ENCODE measurements at regions of chr6 and their contacts with region 1.

Region 1: DNA sequence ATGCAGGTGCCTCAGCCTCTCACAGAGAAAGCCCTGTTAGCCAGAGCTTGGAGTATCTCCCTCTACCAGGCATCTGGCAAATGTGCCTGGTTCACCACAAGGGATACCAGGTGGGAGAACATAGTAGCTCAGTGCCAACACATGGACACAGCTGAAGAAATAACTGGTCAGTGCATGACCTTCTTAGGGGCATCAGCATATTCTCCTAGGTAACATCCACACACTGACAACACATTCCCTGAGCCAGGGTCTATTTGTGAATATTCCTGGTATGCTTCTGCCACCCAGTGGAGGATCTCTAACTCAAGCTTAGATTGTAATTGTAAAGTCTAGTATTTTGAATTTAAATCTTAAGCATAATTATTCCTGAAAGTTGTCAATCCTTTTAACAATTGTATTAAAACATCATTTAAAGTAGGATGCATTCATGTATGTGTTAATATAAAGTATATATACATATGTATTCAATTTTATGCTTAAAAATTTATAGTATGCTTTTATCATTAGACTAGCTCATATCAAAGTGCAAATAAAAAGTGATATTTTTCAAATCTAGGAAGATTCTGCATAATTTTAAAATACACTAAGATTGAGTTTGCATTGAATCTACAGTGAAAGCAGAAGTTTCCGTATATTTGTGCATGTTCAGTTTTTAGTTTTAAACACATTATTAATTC is 45.3 kb upstream of the COL21A1 start:
- H3K4me3 ChIP-seq: no peak overlapping the region
- H3K27ac ChIP-seq: no peak overlapping the region
- H3K4me1 ChIP-seq: no peaks in the 10 kb centered on the region; the same call in 1 of the 2 replicates
- CTCF ChIP-seq: peak; percentile 62; the same call in 1 of the 2 replicates

Region 2: DNA sequence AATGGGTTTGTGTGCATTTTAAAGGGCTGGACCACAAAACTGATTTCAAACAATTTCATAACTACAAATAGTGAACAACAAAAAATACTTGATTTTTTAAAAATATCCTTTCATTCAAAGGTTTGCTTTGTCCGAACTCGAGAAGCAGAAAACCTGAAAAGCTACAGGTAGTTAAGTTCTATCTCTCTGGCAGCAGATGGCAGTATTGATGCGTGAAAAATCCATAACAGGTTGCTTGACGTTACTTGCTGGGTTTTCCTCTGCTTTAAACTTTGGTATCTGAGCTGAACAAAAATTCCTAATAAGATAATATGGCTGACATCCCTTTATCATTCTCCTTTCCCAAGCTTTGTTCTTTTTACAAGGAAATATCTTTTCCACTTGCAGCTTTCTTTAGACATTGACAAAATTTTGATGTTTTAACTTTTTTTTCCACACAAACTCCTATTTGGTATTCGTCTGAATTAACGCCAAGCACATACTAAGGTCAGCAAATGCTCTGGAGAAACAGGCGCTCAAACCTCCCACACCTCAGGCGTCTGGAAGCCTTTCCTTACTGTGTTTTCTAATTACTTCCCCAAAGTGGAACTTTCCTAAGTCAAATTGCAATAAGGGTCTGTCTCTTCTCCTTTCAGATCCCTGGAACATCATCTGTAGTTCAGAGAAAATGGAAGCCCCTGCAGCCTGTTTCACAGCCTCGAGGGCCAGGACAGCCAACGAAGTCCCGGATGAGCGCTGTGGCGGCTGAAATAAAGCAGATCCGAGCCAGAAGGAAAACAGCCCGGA is 1015.7 kb before region 1 on chr6:
- CTCF ChIA-PET with region 1: interaction called, 20 read pairs
- POLR2A ChIA-PET with region 1: no interaction called
- H3K4me3 ChIP-seq: no peak overlapping the region
- H3K27ac ChIP-seq: no peak overlapping the region
- H3K4me1 ChIP-seq: no peaks in the 10 kb centered on the region
- CTCF ChIP-seq: peak; percentile 37; the same call in 1 of the 2 replicates

Region 3: GRCh38 chr6:55886185-55886836 is 406.3 kb before region 1 on chr6:
- CTCF ChIA-PET with region 1: interaction called, 11 read pairs
- POLR2A ChIA-PET with region 1: no interaction called
- H3K4me3 ChIP-seq: no peak overlapping the region
- H3K27ac ChIP-seq: no peak overlapping the region
- H3K4me1 ChIP-seq: peaks cover 13% of the 10 kb centered on the region
- CTCF ChIP-seq: no peak

Region 4: GRCh38 chr6:55963301-55963700 is 329.3 kb before region 1 on chr6:
- CTCF ChIA-PET with region 1: interaction called, 17 read pairs
- POLR2A ChIA-PET with region 1: no interaction called
- H3K4me3 ChIP-seq: no peak overlapping the region
- H3K27ac ChIP-seq: no peak overlapping the region
- H3K4me1 ChIP-seq: no peaks in the 10 kb centered on the region
- CTCF ChIP-seq: no peak

Region 5: GRCh38 chr6:55980627-55981211 is 311.9 kb before region 1 on chr6:
- CTCF ChIA-PET with region 1: interaction called, 81 read pairs
- POLR2A ChIA-PET with region 1: no interaction called
- H3K4me3 ChIP-seq: no peak overlapping the region
- H3K27ac ChIP-seq: no peak overlapping the region
- H3K4me1 ChIP-seq: no peaks in the 10 kb centered on the region
- CTCF ChIP-seq: peak; percentile 36; the same call in 1 of the 2 replicates

Region 6: DNA sequence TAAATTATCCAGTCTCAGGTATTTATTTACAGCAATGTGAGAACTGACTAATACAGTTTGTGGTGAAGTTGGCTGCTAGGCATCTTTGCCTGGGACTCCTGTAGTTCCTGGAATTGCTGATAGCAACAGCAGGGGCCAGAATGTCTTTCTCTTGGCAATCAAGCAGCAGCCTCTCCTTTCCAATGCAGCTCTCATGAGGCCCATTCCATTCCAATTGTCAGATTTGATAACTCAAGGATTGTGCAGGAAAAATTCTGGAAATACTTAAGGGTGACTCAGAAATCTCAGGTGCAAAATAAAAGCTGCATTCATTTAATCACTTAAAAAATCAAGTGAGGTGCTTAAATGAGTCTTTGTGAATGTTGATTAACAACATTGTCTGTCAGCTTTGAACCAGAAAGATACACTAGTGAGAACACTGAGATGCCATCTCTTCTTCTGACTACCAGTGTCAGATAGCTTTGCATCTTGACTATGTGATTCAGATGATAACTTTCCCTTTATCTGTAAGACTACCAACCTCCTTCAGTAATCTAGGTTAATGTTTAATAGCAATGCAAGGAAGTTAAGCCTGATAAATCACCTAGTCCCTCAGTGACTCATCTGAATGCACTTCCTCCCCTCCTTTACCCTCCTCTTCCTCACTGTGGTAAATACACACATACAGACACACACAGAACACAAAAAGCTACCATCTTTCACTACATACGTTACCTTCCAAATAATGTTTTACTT is 13.1 kb before region 1 on chr6:
- CTCF ChIA-PET with region 1: interaction called, 15 read pairs
- POLR2A ChIA-PET with region 1: no interaction called
- H3K4me3 ChIP-seq: no peak overlapping the region
- H3K27ac ChIP-seq: no peak overlapping the region
- H3K4me1 ChIP-seq: no peaks in the 10 kb centered on the region
- CTCF ChIP-seq: no peak

Region 7: GRCh38 chr6:56314683-56315523 is 22.3 kb after region 1 on chr6:
- CTCF ChIA-PET with region 1: interaction called, 10 read pairs
- POLR2A ChIA-PET with region 1: no interaction called
- H3K4me3 ChIP-seq: no peak overlapping the region
- H3K27ac ChIP-seq: no peak overlapping the region
- H3K4me1 ChIP-seq: peaks cover 7% of the 10 kb centered on the region
- CTCF ChIP-seq: peak; percentile 40; the same call in 1 of the 2 replicates

Region 8: DNA sequence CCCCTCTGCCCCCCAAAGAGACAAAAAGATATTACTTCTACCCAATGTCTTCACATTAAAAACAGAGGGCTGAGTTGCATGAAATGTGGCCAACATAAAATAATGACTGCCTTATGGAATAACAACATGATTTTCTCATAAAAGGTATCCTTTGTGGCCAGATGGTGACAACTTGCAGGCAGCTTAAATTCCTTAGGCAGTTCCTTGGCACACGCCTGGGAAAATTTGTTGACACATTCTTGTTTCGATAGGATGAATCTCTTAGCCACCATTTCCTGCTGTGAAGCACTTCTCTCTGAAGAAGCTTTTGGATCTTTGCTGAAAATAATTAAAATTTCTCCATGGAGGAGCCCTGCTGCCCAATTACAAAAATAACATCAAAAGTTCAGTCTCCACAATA is 63.8 kb after region 1 on chr6:
- CTCF ChIA-PET with region 1: no interaction called
- POLR2A ChIA-PET with region 1: no interaction called
- H3K4me3 ChIP-seq: no peak overlapping the region
- H3K27ac ChIP-seq: no peak overlapping the region
- H3K4me1 ChIP-seq: no peaks in the 10 kb centered on the region
- CTCF ChIP-seq: no peak